Activated CD4-positive, alpha-beta memory T cell treated with anti-CD3 and anti-CD28 coated beads for 36 hours (primary cell): ENCODE measurements at regions of chr13 and their contacts with region 1.

Region 1: GRCh38 chr13:108342369-108343289 is 73.1 kb downstream of the TNFSF13B start:
- DNase-seq: peak; percentile 16
- H3K4me3 Mint-ChIP-seq: peak overlapping the region; percentile 49
- H3K27ac Mint-ChIP-seq: peak overlapping the region; percentile 68
- H3K4me1 Mint-ChIP-seq: peaks cover 43% of the 10 kb centered on the region
- H3K27me3 Mint-ChIP-seq: no peaks in the 10 kb centered on the region

Region 2: DNA sequence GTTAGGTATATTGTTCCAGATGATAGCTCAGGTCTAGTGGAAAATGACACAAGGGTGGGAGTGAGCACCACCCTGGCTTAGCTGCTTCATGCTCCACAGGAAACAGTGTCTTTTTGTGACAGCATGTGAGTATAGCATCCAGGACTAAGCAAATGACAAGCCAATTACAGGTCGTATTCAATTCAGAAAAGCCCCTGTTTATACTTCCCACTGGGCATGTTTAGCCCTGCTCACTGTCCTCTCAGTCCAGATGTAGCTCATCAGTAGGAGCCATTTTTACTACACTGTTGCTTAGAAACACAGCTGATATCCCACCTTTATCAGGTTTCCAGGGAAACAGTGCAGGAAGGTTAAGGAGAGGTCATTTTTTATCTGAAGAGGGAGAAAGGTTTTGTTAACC is 116.4 kb before region 1 on chr13:
- CTCF ChIA-PET with region 1: no interaction called
- POLR2A ChIA-PET with region 1: no interaction called
- intact Hi-C with region 1: no loop called
- DNase-seq: no peak
- H3K4me3 Mint-ChIP-seq: no peak overlapping the region
- H3K27ac Mint-ChIP-seq: no peak overlapping the region
- H3K4me1 Mint-ChIP-seq: peaks cover 57% of the 10 kb centered on the region
- H3K27me3 Mint-ChIP-seq: no peaks in the 10 kb centered on the region

Region 3: DNA sequence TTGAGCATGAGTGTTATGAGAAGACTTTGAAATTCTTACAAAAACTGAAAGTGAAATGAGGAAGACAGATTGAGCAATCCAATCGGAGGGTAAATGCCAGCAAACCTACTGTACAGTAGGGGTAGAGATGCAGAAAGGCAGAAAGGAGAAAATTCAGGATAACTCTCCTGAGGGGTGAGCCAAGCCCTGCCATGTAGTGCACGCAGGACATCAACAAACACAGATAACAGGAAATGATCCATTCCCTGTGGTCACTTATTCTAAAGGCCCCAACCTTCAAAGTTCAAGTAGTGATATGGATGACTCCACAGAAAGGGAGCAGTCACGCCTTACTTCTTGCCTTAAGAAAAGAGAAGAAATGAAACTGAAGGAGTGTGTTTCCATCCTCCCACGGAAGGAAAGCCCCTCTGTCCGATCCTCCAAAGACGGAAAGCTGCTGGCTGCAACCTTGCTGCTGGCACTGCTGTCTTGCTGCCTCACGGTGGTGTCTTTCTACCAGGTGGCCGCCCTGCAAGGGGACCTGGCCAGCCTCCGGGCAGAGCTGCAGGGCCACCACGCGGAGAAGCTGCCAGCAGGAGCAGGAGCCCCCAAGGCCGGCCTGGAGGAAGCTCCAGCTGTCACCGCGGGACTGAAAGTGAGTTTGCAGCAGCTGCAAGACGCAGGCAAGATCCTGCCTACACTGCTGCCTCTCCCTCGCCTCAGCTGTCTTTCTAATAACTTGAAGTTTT is 72.9 kb before region 1 on chr13 and contains the start of gene TNFSF13B:
- CTCF ChIA-PET with region 1: no interaction called
- POLR2A ChIA-PET with region 1: no interaction called
- intact Hi-C with region 1: loop called (anchors 5 kb)
- DNase-seq: peak; percentile 72
- H3K4me3 Mint-ChIP-seq: peak within 1 kb of the TSS; percentile 78
- H3K27ac Mint-ChIP-seq: peak within 1 kb of the TSS; percentile 85
- H3K4me1 Mint-ChIP-seq: peaks cover 50% of the 10 kb centered on the region
- H3K27me3 Mint-ChIP-seq: no peaks in the 10 kb centered on the region
- total RNA-seq, gene TNFSF13B: 3.1 to 4.3 TPM

Region 4: GRCh38 chr13:108408672-108409071 is 66.0 kb after region 1 on chr13:
- CTCF ChIA-PET with region 1: no interaction called
- POLR2A ChIA-PET with region 1: no interaction called
- intact Hi-C with region 1: loop called (anchors 2 kb)
- DNase-seq: peak; percentile 20
- H3K4me3 Mint-ChIP-seq: no peak overlapping the region
- H3K27ac Mint-ChIP-seq: peak overlapping the region; percentile 24
- H3K4me1 Mint-ChIP-seq: peaks cover 56% of the 10 kb centered on the region
- H3K27me3 Mint-ChIP-seq: no peaks in the 10 kb centered on the region

Region 5: DNA sequence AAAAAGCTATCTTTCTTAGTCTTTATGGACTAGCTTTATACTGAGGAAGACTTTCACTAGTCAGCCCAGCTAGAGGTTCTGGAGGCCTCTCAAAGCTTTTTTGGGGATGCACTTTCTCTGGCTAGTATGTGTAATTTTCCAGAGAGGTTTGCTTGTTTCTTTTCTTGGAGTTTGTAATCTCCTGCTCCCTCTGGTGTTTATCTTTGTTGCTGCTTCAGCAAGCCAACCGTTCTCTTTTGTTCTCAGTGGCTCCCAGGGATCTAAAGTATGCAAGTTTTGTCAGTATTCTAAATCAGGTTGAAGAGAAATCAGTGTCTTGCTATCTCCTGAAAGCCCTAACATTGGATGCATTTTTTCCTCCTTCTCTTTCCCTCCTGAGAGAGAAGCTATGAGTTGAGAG is 165.6 kb after region 1 on chr13:
- CTCF ChIA-PET with region 1: interaction called, 11 read pairs
- POLR2A ChIA-PET with region 1: no interaction called
- intact Hi-C with region 1: loop called (anchors 5 kb)
- DNase-seq: no peak
- H3K4me3 Mint-ChIP-seq: no peak overlapping the region
- H3K27ac Mint-ChIP-seq: no peak overlapping the region
- H3K4me1 Mint-ChIP-seq: peaks cover 11% of the 10 kb centered on the region
- H3K27me3 Mint-ChIP-seq: no peaks in the 10 kb centered on the region

Region 6: GRCh38 chr13:108595436-108596274 is 253.0 kb after region 1 on chr13:
- CTCF ChIA-PET with region 1: interaction called, 3 read pairs
- POLR2A ChIA-PET with region 1: no interaction called
- intact Hi-C with region 1: loop called (anchors 5 kb)
- DNase-seq: peak; percentile 82
- H3K4me3 Mint-ChIP-seq: no peak overlapping the region
- H3K27ac Mint-ChIP-seq: no peak overlapping the region
- H3K4me1 Mint-ChIP-seq: peaks cover 16% of the 10 kb centered on the region
- H3K27me3 Mint-ChIP-seq: peaks cover 10% of the 10 kb centered on the region

Region 7: DNA sequence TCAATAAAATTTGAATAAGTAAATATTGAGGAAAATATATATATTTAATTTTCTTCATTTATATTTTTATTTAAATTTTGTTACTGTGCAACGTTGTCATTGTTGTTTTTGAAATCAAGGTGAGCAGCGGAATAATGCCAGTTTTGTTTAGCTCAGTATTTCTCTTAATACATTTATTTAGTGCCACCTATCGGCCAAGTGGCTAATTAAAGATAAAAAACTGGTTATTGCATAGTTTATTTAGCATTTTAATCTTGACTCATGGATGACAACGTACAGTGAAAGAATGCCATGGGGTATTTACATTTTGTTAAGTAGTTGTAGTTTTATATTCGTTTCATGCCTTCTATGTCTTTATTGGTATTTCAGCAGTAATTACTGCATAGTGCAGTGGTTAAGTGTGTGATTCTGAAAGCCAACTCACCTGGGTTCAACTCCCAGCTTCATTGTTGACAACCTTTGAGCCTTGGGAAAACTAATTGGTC is 552.6 kb after region 1 on chr13:
- CTCF ChIA-PET with region 1: interaction called, 13 read pairs
- POLR2A ChIA-PET with region 1: no interaction called
- intact Hi-C with region 1: loop called (anchors 1 kb)
- DNase-seq: no peak
- H3K4me3 Mint-ChIP-seq: no peak overlapping the region
- H3K27ac Mint-ChIP-seq: no peak overlapping the region
- H3K4me1 Mint-ChIP-seq: peaks cover 14% of the 10 kb centered on the region
- H3K27me3 Mint-ChIP-seq: no peaks in the 10 kb centered on the region

Region 8: GRCh38 chr13:108915634-108916512 is 573.2 kb after region 1 on chr13:
- CTCF ChIA-PET with region 1: interaction called, 3 read pairs
- POLR2A ChIA-PET with region 1: no interaction called
- intact Hi-C with region 1: loop called (anchors 5 kb)
- DNase-seq: peak; percentile 95
- H3K4me3 Mint-ChIP-seq: peak overlapping the region; percentile 68
- H3K27ac Mint-ChIP-seq: peak overlapping the region; percentile 78
- H3K4me1 Mint-ChIP-seq: peaks cover 20% of the 10 kb centered on the region
- H3K27me3 Mint-ChIP-seq: no peaks in the 10 kb centered on the region